Activated B cell treated with CpG ODN at 0.5 μM for 24 hours (primary cell): ENCODE measurements at regions of chr2 and their contacts with region 1.

Region 1: DNA sequence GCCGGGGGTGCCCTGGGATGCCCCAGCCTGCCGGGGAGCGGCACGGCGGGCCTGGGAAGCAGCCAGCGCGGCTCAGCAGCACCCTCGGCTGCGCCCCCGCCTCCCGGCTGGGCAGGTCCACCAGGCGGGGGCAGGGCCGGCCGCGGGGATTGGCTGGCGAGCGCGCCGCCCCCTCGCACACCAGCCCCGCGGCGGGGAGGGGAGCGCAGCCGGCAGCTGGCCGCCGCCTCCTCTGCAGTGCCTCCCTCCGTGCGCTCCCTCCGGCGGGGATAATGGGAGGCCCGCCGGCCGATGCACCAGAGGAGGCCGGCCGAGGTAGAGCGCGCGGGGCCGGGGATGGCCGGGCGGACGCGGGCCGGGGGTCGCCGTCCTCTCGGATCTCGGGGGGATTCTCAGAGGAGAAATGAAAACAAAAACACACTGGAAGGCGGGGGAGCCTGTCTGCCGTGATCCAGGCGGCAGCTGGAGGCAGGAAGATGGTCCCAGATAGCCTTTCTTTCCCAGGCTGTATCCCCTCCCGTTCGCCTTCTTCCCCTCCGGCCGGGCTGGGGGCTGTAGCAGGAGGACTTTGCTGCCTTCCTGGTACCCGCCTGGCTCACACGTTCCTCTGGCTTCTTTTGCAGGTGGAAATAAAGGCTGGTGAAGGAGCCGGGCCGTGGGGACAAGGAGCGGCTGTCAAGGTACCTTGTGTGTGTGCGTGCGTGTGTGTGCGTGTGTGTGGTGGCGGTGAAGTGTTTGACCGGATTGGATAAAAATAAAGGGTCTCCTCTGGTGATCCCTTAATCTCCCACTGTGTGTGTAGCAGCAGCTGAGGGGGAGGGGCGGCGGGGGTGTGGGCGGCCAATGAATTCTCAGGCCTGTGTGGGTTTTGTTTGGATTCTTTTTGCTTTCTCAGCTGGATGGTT is 18.0 kb downstream of the TET3 start:
- DNase-seq: peak; percentile 78
- ATAC-seq: peak; percentile 91
- H3K4me3 Mint-ChIP-seq: peak overlapping the region; percentile 82
- H3K27ac Mint-ChIP-seq: peak overlapping the region; percentile 50
- H3K4me1 Mint-ChIP-seq: peaks cover 73% of the 10 kb centered on the region
- H3K27me3 Mint-ChIP-seq: no peaks in the 10 kb centered on the region
- CTCF ChIP-seq: no peak

Region 2: GRCh38 chr2:74031221-74031620 is 28.5 kb after region 1 on chr2:
- CTCF ChIA-PET with region 1: no interaction called
- POLR2A ChIA-PET with region 1: interaction called, 10 read pairs
- intact Hi-C with region 1: loop called (anchors 2 kb)
- DNase-seq: no peak
- ATAC-seq: no peak
- H3K4me3 Mint-ChIP-seq: peak overlapping the region; percentile 90
- H3K27ac Mint-ChIP-seq: peak overlapping the region; percentile 99
- H3K4me1 Mint-ChIP-seq: peaks cover 84% of the 10 kb centered on the region
- H3K27me3 Mint-ChIP-seq: no peaks in the 10 kb centered on the region
- CTCF ChIP-seq: no peak

Region 3: DNA sequence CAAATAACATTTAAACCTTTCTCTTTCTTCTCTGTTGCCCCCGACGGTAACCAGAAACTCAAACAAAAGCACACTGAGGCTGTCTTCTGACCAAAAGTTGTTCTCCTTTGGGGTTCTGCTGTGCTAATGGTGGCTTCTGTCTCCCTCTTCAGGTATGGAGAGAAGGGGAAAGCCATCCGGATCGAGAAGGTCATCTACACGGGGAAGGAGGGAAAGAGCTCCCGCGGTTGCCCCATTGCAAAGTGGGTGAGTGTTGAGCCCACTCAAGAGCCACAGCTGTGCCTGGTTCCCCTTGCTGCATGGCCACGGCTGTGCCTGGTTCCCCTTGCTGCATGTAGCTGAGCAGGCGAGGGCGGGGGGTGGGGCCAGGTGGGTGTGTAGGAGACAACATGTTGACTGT is 77.6 kb after region 1 on chr2:
- CTCF ChIA-PET with region 1: interaction called, 3 read pairs
- POLR2A ChIA-PET with region 1: interaction called, 4 read pairs
- intact Hi-C with region 1: loop called (anchors 2 kb)
- DNase-seq: no peak
- ATAC-seq: peak; percentile 28
- H3K4me3 Mint-ChIP-seq: no peak overlapping the region
- H3K27ac Mint-ChIP-seq: peak overlapping the region; percentile 67
- H3K4me1 Mint-ChIP-seq: peaks cover 22% of the 10 kb centered on the region
- H3K27me3 Mint-ChIP-seq: no peaks in the 10 kb centered on the region
- CTCF ChIP-seq: no peak

Region 4: DNA sequence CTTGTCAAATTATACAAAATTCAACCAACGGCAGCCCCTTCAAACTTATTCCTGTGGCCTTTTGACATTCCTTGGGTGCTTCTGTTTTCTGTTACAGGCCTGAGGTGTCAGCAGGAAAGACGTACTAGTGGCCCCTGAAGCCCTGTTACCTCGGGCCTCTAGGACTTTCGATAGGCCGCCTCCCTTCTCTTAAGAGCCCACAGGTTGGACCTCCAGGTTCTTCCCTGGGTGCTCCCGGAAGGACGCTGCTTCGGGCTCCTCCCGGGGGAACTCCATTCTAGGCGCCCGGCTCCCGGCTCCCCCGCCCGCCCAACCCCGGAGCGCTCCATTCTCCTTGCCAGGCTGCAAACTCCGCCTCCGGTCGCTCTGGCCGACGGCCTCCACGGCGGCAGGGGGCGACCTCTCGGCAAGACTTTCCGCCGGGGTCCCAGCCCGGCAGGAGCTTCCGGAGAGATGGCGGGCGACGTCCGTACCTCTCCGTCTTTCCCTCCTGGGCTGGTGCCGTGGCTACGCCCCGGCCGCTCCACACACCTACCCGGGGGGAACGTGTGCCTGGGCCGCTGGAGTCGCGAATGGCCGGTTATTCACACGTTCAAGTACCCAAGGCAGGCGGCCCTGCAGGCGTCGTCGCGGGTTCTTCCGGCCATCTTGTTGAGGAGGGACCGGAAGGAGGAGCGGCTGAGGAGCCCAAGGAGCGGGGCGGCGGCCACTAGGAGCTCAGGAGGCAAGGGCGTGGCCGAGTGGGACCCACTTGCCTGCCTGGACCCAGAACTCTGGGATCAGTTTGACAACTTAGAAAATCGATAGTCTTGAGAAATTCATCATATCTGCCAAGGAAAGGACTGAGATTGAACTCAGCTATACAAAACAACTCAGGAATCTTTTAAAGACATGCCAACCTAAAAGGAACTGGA is 117.4 kb after region 1 on chr2:
- CTCF ChIA-PET with region 1: no interaction called
- POLR2A ChIA-PET with region 1: interaction called, 6 read pairs
- intact Hi-C with region 1: loop called (anchors 5 kb)
- DNase-seq: peak; percentile 86
- ATAC-seq: peak; percentile 95
- H3K4me3 Mint-ChIP-seq: peak overlapping the region; percentile 89
- H3K27ac Mint-ChIP-seq: peak overlapping the region; percentile 94
- H3K4me1 Mint-ChIP-seq: peaks cover 6% of the 10 kb centered on the region
- H3K27me3 Mint-ChIP-seq: peaks cover 4% of the 10 kb centered on the region
- CTCF ChIP-seq: no peak